Activated CD8-positive, alpha-beta T cell treated with anti-CD3 and anti-CD28 coated beads for 36 hours (primary cell): ENCODE measurements at regions of chr1 and their contacts with region 1.

Region 1: DNA sequence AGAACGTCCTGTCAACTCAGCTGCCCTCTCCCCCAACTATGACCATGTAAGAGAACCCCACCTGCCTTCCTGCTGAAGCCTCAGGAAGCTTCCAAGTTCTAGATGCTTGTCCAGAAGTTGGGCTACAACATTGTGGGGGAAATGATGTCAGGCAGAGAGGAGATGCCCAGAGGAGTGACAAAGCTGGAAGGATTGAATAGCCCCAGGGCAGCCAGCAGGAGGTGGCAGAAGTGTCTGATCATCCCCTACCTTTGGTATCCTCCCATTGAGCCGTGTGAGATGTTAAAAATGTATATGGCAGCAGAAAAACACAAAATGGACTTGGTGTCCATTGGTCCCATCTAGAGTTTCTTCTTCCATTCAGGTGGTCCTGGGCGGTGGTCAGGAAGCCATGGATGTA is 6.6 kb downstream of the EIF3I start:
- DNase-seq: no peak
- ATAC-seq: no peak
- H3K4me3 Mint-ChIP-seq: no peak overlapping the region
- H3K27ac Mint-ChIP-seq: peak overlapping the region; percentile 16
- H3K4me1 Mint-ChIP-seq: peaks cover 14% of the 10 kb centered on the region
- H3K27me3 Mint-ChIP-seq: no peaks in the 10 kb centered on the region
- CTCF ChIP-seq: no peak

Region 2: GRCh38 chr1:32240140-32240951 is 11.6 kb after region 1 on chr1:
- CTCF ChIA-PET with region 1: interaction called, 14 read pairs
- POLR2A ChIA-PET with region 1: interaction called, 16 read pairs
- intact Hi-C with region 1: no loop called
- DNase-seq: peak; percentile 67
- ATAC-seq: peak; percentile 65
- H3K4me3 Mint-ChIP-seq: peak overlapping the region; percentile 80
- H3K27ac Mint-ChIP-seq: peak overlapping the region; percentile 59
- H3K4me1 Mint-ChIP-seq: peaks cover 17% of the 10 kb centered on the region
- H3K27me3 Mint-ChIP-seq: no peaks in the 10 kb centered on the region
- CTCF ChIP-seq: peak; percentile 33

Region 3: GRCh38 chr1:32413507-32414185 is 184.9 kb after region 1 on chr1:
- CTCF ChIA-PET with region 1: no interaction called
- POLR2A ChIA-PET with region 1: no interaction called
- intact Hi-C with region 1: no loop called
- DNase-seq: peak; percentile 85
- ATAC-seq: peak; percentile 79
- H3K4me3 Mint-ChIP-seq: no peak overlapping the region
- H3K27ac Mint-ChIP-seq: no peak overlapping the region
- H3K4me1 Mint-ChIP-seq: peaks cover 3% of the 10 kb centered on the region
- H3K27me3 Mint-ChIP-seq: peaks cover 4% of the 10 kb centered on the region
- CTCF ChIP-seq: peak; percentile 87